HAP-1 (cell line): ENCODE measurements at regions of chr7 and their contacts with region 1.

Region 1: DNA sequence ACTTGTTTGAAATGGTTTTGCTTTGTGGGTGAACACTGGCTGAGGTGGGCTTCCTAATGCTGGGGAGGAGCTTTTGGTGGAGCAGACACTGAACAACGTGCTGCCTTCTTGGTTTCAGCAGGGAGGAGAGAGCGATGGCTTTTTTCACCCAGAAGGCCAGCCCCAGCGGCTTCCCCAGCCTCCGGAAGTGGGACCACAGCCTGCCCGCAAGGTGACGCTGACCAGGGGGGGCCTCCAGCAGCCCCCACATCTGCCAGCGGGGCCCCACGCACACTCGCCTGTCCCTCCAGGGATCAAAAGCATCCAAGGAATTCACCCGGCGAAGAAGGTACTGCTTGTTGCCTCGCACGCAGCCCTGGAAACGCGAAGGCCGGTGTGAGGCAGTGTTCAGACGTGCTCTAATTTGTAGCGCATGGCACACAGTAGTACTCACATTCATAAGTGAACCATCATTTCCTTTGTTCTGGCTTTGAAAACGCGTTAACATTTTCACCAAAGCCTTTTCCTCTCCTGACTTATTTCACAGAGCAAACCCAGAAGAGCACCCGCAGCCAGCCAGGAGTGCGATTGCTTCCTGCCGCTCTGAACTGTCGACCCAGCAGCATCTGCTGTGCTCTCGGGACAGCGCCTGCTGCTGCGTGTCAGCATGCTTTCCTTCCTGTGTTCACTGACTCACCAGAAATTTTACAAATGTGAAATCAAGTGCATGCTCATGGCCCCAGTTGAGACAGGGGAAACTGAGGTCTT is 48.4 kb downstream of the SHH start:
- DNase-seq: no peak
- H3K4me3 ChIP-seq: no peak overlapping the region
- H3K4me1 ChIP-seq: no peaks in the 10 kb centered on the region
- H3K27me3 ChIP-seq: no peaks in the 10 kb centered on the region

Region 2: DNA sequence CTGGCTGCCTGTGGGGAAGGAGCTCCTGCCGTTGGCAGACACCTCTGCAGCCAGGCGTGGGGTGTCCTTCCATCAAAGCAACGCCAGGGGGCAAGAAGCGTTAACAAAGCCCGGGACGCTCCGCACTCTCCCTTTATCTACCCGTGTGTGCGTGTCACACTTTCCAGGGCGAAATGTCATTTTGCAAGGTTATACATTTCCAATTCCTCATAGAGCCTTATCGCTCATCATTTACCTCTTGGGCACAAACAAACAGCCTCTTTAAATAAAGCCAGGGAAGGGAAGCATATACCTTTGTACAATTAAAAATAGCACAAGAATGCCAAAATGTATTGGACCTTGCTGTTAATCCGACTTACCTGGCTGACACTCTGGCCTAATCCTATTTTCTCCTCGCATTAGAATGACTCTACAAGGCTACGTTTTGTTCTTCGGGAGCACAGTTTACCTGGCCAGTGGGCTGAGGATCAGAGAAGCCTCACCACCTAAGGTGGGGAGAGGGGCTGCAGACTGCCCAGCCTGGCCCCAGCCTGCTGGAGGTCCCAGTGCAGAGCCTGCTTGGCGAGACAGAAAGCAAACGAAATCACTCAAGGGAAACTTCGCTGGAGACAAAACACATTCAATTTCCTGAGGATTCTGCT is 383.5 kb before region 1 on chr7:
- in situ Hi-C with region 1: loop called (anchors 25 kb)
- DNase-seq: peak; percentile 57 to 87
- H3K4me3 ChIP-seq: no peak overlapping the region
- H3K4me1 ChIP-seq: peaks cover 2% of the 10 kb centered on the region; the same call in 1 of the 2 replicates
- H3K27me3 ChIP-seq: peaks cover 51% of the 10 kb centered on the region

Region 3: GRCh38 chr7:155878674-155879073 is 114.8 kb after region 1 on chr7:
- in situ Hi-C with region 1: no loop called
- DNase-seq: no peak
- H3K4me3 ChIP-seq: no peak overlapping the region
- H3K4me1 ChIP-seq: no peaks in the 10 kb centered on the region
- H3K27me3 ChIP-seq: no peaks in the 10 kb centered on the region

Region 4: GRCh38 chr7:155907450-155908200 is 143.8 kb after region 1 on chr7:
- in situ Hi-C with region 1: no loop called
- DNase-seq: no peak
- H3K4me3 ChIP-seq: no peak overlapping the region
- H3K4me1 ChIP-seq: no peaks in the 10 kb centered on the region
- H3K27me3 ChIP-seq: no peaks in the 10 kb centered on the region